ENCODE measurements at regions of chr15 and their contacts with region 1.

Region 1: GRCh38 chr15:41603941-41604911 is 45.2 kb downstream of the TYRO3 start:
- DNase-seq: peak; percentile 79
- ATAC-seq: peak; percentile 98
- H3K4me3 Mint-ChIP-seq: peak overlapping the region; percentile 46
- H3K27ac Mint-ChIP-seq: no peak overlapping the region; the same call in 1 of the 2 replicates
- H3K4me1 Mint-ChIP-seq: peaks cover 7% of the 10 kb centered on the region
- H3K27me3 Mint-ChIP-seq: no peaks in the 10 kb centered on the region; the same call in 1 of the 2 replicates
- CTCF ChIP-seq: peak; percentile 63

Region 2: DNA sequence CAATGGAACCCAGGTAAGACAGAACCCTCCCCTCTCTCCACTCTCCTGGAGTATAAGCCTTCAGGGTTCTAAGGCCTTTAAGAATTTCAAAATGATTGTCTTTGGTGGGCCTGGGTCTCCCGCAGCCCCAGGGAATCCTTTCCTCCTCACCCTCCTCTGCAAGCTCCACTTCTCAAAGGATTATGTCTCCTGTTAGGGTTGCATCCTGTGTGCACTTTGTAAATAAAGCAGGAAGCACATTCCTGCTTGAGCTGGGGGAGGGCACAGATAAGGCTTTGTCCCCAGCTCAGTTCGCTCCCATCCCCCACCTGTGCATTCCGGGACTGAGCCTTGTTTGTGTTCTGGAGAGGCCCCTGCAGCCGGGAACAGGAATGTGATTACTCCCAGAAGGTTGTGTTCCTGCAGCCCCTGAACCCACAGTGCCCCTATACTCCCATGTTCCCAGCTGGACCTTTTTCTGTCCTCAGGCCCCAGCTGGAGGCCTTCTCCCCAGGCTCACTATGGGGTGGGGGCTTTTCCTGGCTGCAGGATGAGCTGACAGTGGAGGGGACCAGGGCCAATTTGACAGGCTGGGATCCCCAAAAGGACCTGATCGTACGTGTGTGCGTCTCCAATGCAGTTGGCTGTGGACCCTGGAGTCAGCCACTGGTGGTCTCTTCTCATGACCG is 35.7 kb before region 1 on chr15:
- CTCF ChIA-PET with region 1: interaction called, 51 read pairs
- POLR2A ChIA-PET with region 1: interaction called, 6 read pairs
- DNase-seq: peak; percentile 89
- ATAC-seq: peak; percentile 78
- H3K4me3 Mint-ChIP-seq: peak overlapping the region; percentile 41
- H3K27ac Mint-ChIP-seq: peak overlapping the region; percentile 95
- H3K4me1 Mint-ChIP-seq: peaks cover 62% of the 10 kb centered on the region
- H3K27me3 Mint-ChIP-seq: no peaks in the 10 kb centered on the region
- CTCF ChIP-seq: no peak

Region 3: GRCh38 chr15:41621200-41622193 is 17.3 kb after region 1 on chr15:
- CTCF ChIA-PET with region 1: interaction called, 18 read pairs
- POLR2A ChIA-PET with region 1: no interaction called
- DNase-seq: peak; percentile 85
- ATAC-seq: peak; percentile 78
- H3K4me3 Mint-ChIP-seq: peak overlapping the region; percentile 57
- H3K27ac Mint-ChIP-seq: no peak overlapping the region
- H3K4me1 Mint-ChIP-seq: peaks cover 7% of the 10 kb centered on the region
- H3K27me3 Mint-ChIP-seq: peaks cover 46% of the 10 kb centered on the region
- CTCF ChIP-seq: no peak

Region 4: GRCh38 chr15:41660235-41661077 is 56.2 kb after region 1 on chr15 and contains the start of gene MGA:
- CTCF ChIA-PET with region 1: interaction called, 22 read pairs
- POLR2A ChIA-PET with region 1: no interaction called
- DNase-seq: peak; percentile 91
- ATAC-seq: peak; percentile 80
- H3K4me3 Mint-ChIP-seq: peak within 1 kb of the TSS; percentile 83
- H3K27ac Mint-ChIP-seq: peak within 1 kb of the TSS; percentile 36
- H3K4me1 Mint-ChIP-seq: peaks cover 23% of the 10 kb centered on the region
- H3K27me3 Mint-ChIP-seq: peaks cover 45% of the 10 kb centered on the region
- CTCF ChIP-seq: no peak
- total RNA-seq, gene MGA: 35.9 to 36.9 TPM (median 36.4 TPM) in 3 replicates